Prostate gland (tissue), 2 donors: ENCODE measurements at regions of chr9 and their contacts with region 1.

Region 1: GRCh38 chr9:96061293-96061987 is 185.9 kb downstream of the ERCC6L2 start:
- DNase-seq: peak; percentile 38
- H3K4me3 ChIP-seq: no peak overlapping the region
- H3K27ac ChIP-seq: peak overlapping the region in 1 of 2 donors; percentile 6
- H3K4me1 ChIP-seq: no peaks in the 10 kb centered on the region
- H3K27me3 ChIP-seq: no peaks in the 10 kb centered on the region
- CTCF ChIP-seq: peak in 3 of 4 experiments; percentile 28 to 59 (median 56)
- POLR2A ChIP-seq: no peak

Region 2: DNA sequence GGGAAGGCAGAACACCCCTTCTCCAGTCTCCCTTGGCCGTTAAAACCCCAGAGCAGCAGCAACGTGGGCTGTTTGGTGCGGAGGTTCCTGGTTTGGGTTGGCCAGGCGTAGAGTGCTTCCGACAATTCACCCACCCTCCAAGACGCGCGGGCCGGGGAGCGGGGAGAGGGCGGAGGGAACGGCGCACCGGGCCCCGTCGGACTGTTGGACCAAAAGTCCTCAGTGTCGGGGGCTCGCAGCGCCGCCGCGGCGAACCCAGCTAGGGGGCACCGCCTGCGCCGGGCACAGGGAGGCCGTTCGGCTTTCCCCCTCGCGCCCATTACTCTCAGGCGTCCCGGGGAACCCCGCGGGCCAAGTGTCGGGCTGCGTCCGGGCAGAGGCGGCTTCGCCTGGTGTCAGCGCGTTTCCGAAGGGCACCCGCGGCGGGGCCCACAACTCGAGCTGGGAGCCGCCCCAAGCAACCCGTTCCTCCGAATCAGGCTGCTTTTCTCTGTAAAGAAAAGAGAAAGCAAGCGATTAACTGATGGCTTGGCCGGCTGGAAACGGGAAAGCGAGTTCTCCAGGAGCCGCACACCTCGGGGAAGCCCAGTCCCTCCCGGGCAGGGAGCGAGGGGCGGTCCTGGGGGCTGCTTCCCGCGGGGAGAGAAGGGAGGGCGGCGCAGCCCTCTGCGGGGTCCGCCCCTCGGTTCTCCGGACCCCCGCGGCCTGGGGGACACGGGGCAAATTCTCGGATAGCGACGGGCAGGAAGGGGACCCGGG is 40.5 kb before region 1 on chr9:
- intact Hi-C with region 1: no loop called
- DNase-seq: no peak
- H3K4me3 ChIP-seq: peak overlapping the region; percentile 48 to 51
- H3K27ac ChIP-seq: peak overlapping the region; percentile 84
- H3K4me1 ChIP-seq: no peaks in the 10 kb centered on the region
- H3K27me3 ChIP-seq: no peaks in the 10 kb centered on the region
- CTCF ChIP-seq: peak in 1 of 4 experiments; percentile 25
- POLR2A ChIP-seq: peak; percentile 31

Region 3: GRCh38 chr9:96150324-96151227 is 89.1 kb after region 1 on chr9:
- intact Hi-C with region 1: loop called (anchors 10 kb)
- DNase-seq: no peak
- H3K4me3 ChIP-seq: no peak overlapping the region
- H3K27ac ChIP-seq: no peak overlapping the region
- H3K4me1 ChIP-seq: peaks cover 6% of the 10 kb centered on the region
- H3K27me3 ChIP-seq: no peaks in the 10 kb centered on the region
- CTCF ChIP-seq: no peak
- POLR2A ChIP-seq: no peak